Ovary (tissue), 10 donors: ENCODE measurements at regions of chr18 and their contacts with region 1.

Region 1: GRCh38 chr18:29664278-29665036 is 1378.1 kb downstream of the DSC3 start:
- DNase-seq: no peak
- H3K4me3 ChIP-seq: no peak overlapping the region
- H3K27ac ChIP-seq: no peak overlapping the region
- H3K4me1 ChIP-seq: no peaks in the 10 kb centered on the region
- H3K27me3 ChIP-seq: no peaks in the 10 kb centered on the region
- CTCF ChIP-seq: no peak
- EP300 ChIP-seq: no peak
- POLR2A ChIP-seq: no peak

Region 2: GRCh38 chr18:30613467-30613801 is 949.0 kb after region 1 on chr18:
- intact Hi-C with region 1: loop called in 1 of 4 experiments (anchors 5 kb)
- DNase-seq: no peak
- H3K4me3 ChIP-seq: no peak overlapping the region
- H3K27ac ChIP-seq: no peak overlapping the region
- H3K4me1 ChIP-seq: no peaks in the 10 kb centered on the region
- H3K27me3 ChIP-seq: no peaks in the 10 kb centered on the region
- CTCF ChIP-seq: no peak
- EP300 ChIP-seq: no peak
- POLR2A ChIP-seq: no peak